ENCODE measurements at regions of chr3 and their contacts with region 1.

Region 1: GRCh38 chr3:193872265-193872753 is 263.6 kb upstream of the HES1 start:
- DNase-seq: peak; percentile 99
- ATAC-seq: peak; percentile 68
- H3K4me3 ChIP-seq: no peak overlapping the region
- H3K27ac ChIP-seq: peak overlapping the region; percentile 76
- H3K4me1 ChIP-seq: peaks cover 47% of the 10 kb centered on the region
- H3K27me3 ChIP-seq: no peaks in the 10 kb centered on the region
- CTCF ChIP-seq: no peak

Region 2: DNA sequence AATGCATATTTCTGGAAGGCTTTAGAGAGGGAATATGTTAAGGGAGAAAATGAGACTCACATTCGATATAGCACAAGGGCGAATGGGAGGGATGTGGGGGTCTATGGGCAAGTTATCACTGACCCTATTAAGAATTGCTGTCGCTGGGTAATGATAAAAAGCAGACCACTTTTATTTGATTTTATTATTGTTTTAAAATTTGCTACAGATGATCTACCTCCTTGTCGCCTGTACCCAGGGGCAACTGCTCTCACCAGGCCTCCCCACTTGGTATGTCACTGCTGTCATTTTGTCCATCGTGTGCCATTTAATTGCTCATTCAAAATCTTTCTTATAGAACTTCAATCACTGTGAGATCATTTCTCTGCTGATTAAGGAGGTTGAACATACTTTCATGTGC is 125.5 kb before region 1 on chr3:
- CTCF ChIA-PET with region 1: no interaction called
- POLR2A ChIA-PET with region 1: no interaction called
- intact Hi-C with region 1: no loop called
- DNase-seq: no peak
- ATAC-seq: no peak
- H3K4me3 ChIP-seq: no peak overlapping the region
- H3K27ac ChIP-seq: no peak overlapping the region
- H3K4me1 ChIP-seq: peaks cover 4% of the 10 kb centered on the region; the same call in 1 of the 2 replicates
- H3K27me3 ChIP-seq: no peaks in the 10 kb centered on the region
- CTCF ChIP-seq: no peak

Region 3: GRCh38 chr3:193788189-193788991 is 83.9 kb before region 1 on chr3:
- CTCF ChIA-PET with region 1: interaction called, 3 read pairs
- POLR2A ChIA-PET with region 1: interaction called, 3 read pairs
- intact Hi-C with region 1: loop called (anchors 2 kb)
- DNase-seq: peak; percentile 75
- ATAC-seq: peak; percentile 82
- H3K4me3 ChIP-seq: no peak overlapping the region
- H3K27ac ChIP-seq: no peak overlapping the region
- H3K4me1 ChIP-seq: peaks cover 28% of the 10 kb centered on the region
- H3K27me3 ChIP-seq: no peaks in the 10 kb centered on the region
- CTCF ChIP-seq: peak; percentile 90

Region 4: DNA sequence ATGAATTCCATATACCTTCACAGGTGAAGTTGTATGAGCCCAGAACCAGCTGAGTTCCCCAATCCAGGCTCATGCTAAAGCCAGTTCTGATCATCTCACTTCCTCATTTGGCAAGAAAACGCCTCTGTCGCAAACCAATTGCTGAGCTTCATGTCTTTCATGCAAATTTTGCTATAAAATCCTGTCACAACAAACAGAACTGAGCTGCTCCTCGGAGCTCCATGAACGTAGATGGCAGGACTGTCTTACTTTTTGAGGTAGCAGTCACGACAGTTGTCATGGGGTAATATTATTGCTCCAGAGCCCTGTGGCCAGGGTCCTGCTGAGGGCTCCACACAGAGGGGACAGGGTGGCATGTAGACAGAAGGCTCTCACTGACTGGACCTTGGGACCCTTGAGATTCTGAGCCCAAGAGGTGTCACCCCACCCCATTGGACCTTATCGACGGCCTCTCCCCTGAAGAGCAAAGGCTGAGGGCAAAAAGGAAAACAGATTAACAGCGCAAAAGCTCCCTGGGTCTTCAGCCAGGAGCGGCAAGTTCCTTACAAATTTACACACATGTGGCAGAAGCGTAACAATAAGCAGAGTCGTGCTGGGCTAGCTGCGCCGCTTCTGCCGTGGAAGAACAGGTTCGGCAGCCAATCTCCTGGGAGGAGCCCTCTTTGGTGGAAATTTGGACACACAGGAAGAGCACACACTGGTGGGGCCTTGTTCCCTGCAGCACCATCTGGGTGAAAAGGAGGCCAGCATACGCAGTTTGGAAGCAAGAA is 30.1 kb before region 1 on chr3:
- CTCF ChIA-PET with region 1: no interaction called
- POLR2A ChIA-PET with region 1: interaction called, 4 read pairs
- intact Hi-C with region 1: loop called (anchors 1 kb)
- DNase-seq: no peak
- ATAC-seq: no peak
- H3K4me3 ChIP-seq: no peak overlapping the region
- H3K27ac ChIP-seq: no peak overlapping the region
- H3K4me1 ChIP-seq: peaks cover 38% of the 10 kb centered on the region
- H3K27me3 ChIP-seq: no peaks in the 10 kb centered on the region
- CTCF ChIP-seq: no peak

Region 5: GRCh38 chr3:193971261-193971751 is 99.0 kb after region 1 on chr3:
- CTCF ChIA-PET with region 1: no interaction called
- POLR2A ChIA-PET with region 1: no interaction called
- intact Hi-C with region 1: loop called (anchors 1 kb)
- DNase-seq: peak; percentile 81
- ATAC-seq: peak; percentile 86
- H3K4me3 ChIP-seq: peak overlapping the region; percentile 66
- H3K27ac ChIP-seq: peak overlapping the region; percentile 91
- H3K4me1 ChIP-seq: peaks cover 35% of the 10 kb centered on the region
- H3K27me3 ChIP-seq: no peaks in the 10 kb centered on the region
- CTCF ChIP-seq: no peak

Region 6: DNA sequence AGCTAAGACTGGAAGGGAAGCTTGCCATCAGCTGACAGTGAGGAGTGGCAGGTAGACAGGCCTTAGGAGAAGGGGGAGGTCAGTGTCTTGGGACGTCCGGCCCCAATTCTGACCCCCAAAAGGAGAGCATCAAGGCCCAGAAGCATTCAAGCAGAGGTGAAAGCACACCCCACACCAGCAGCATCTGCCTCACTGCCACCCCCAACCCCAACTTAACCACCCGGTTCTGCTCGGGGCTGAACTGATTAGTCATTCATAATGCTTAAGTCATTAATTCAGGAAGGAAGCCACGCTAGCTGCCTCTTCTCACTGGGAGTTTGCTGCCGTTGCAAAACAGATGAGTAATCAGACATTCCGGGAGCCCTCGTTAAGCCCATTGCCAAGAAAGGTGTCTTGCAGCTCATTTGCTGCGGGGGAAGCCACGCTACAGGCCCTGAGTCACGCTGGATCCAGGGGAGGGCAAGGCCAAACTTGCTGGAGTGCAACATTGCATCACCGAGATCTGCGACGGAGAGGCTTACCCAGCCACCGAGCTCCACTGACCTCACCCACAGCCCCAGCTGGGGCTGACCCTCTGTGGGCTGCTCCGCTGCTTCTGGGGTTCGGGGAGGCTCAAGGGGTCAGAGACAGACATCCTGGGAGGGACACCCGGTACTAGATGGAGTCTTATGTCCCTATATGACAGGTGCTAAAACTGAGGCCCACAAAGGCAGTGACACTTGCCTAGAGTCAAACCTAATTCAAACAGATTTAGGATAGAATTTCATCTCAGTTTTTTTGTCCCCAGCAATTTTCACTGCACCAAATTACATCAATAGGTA is 217.3 kb after region 1 on chr3:
- CTCF ChIA-PET with region 1: no interaction called
- POLR2A ChIA-PET with region 1: no interaction called
- intact Hi-C with region 1: loop called (anchors 1 kb)
- DNase-seq: peak; percentile 99
- ATAC-seq: peak; percentile 88
- H3K4me3 ChIP-seq: 0 out of 2 replicates have a peak overlapping the region, but pooled peaks have one; percentile 21
- H3K27ac ChIP-seq: peak overlapping the region; percentile 73
- H3K4me1 ChIP-seq: peaks cover 39% of the 10 kb centered on the region
- H3K27me3 ChIP-seq: no peaks in the 10 kb centered on the region
- CTCF ChIP-seq: no peak

Region 7: GRCh38 chr3:194315088-194315964 is 443.0 kb after region 1 on chr3:
- CTCF ChIA-PET with region 1: interaction called, 13 read pairs
- POLR2A ChIA-PET with region 1: no interaction called
- intact Hi-C with region 1: loop called (anchors 5 kb)
- DNase-seq: peak; percentile 89
- ATAC-seq: peak; percentile 73
- H3K4me3 ChIP-seq: peak overlapping the region; percentile 64
- H3K27ac ChIP-seq: no peak overlapping the region
- H3K4me1 ChIP-seq: peaks cover 32% of the 10 kb centered on the region
- H3K27me3 ChIP-seq: no peaks in the 10 kb centered on the region
- CTCF ChIP-seq: peak; percentile 93